Dorsolateral prefrontal cortex (tissue), 120 donors: ENCODE measurements at regions of chr18 and their contacts with region 1.

Region 1: GRCh38 chr18:26734760-26735159 is 130.7 kb downstream of the AQP4 start:
- DNase-seq: no peak
- H3K4me3 ChIP-seq: no peak overlapping the region
- H3K27ac ChIP-seq: no peak overlapping the region
- H3K27me3 ChIP-seq: no peaks in the 10 kb centered on the region
- CTCF ChIP-seq: no peak

Region 2: DNA sequence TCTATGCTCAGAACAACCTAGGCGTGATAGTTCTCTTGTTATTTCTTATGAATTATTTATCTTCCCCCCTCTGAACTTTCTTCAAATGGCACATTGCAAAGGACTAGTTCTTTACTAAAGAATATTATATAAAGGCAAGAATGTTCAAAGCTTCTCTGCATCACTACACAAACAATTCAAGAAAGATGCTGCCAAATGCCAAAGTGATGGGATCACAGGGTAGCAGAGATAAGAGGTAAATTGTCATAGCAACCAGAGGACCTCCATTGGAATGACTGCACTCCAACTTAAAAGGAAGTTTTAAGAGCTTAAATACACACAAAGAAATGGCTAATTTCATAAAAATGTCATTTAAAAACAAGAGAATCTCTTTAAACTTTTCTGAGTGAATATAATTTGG is 57.9 kb after region 1 on chr18:
- intact Hi-C with region 1: loop called in 1 of 2 experiments (anchors 10 kb)
- DNase-seq: no peak
- H3K4me3 ChIP-seq: no peak overlapping the region
- H3K27ac ChIP-seq: no peak overlapping the region
- H3K27me3 ChIP-seq: no peaks in the 10 kb centered on the region
- CTCF ChIP-seq: no peak